Posterior cingulate gyrus (tissue), 11 donors: ENCODE measurements at regions of chr2 and their contacts with region 1.

Region 1: GRCh38 chr2:217993817-217994463 is 8.9 kb downstream of the TNS1 start:
- DNase-seq: peak in 8 of 10 donors; percentile 48 to 93 (median 68)

Region 2: GRCh38 chr2:217934321-217935131 is 59.4 kb before region 1 on chr2:
- intact Hi-C with region 1: no loop called
- DNase-seq: peak in 6 of 10 donors; percentile 27 to 91 (median 67)

Region 3: DNA sequence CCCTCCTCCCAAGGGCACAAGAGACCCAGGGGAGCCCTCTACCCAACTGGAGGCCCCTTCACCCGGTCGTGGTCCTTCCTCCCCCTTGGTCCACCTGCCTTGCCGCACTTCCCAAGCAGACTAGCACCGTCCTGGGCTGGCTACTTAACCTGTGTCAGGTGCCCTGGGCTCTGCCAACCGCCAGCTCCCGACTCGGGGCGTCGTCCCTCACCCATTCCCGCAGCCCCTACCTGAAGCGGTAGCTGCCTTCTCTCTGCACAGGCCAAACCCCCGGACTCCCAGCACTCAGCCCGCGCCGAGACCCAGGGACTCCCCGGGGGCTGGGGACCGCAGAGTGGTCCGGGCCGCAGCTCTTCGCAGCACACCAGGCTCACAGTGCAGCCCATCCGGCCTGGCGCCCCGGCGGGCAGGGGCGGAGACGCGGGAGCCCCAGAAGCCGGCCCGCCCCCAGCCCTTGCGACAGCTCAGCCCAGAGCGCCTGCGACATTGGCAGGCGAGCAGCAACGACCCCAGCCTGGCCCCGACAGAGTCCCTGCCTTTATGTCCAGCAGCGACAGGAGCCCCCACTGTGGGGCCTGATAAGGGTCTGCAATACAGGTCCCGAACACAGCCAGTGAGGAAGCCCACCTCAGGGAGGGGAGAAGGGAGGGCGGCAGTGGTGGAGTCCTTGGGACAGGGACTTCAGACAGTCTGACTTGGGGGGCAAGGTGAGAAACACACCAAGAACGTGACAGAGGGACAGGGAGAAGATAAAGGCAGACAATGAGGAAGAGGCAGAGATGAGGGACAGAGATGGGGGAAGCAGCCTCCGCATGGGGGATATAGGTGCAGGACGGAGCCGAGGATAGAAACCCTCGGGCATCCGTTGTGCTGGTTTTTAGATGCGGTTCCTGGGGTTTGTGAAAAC is 39.9 kb after region 1 on chr2:
- intact Hi-C with region 1: loop called (anchors 2 kb)
- DNase-seq: peak in 2 of 10 donors; percentile 76 to 79